HCT116 (cell line): ENCODE measurements at regions of chr9 and their contacts with region 1.

Region 1: GRCh38 chr9:122350638-122351355 is 20.0 kb upstream of the PTGS1 start:
- DNase-seq: peak; percentile 27
- ATAC-seq: peak; percentile 91
- H3K4me3 ChIP-seq: no peak overlapping the region
- H3K27ac ChIP-seq: no peak overlapping the region
- H3K4me1 ChIP-seq: peaks cover 3 to 13% of the 10 kb centered on the region in 2 experiments; a peak in 3 of 4 replicates
- H3K27me3 ChIP-seq: no peaks in the 10 kb centered on the region
- CTCF ChIP-seq: peak; percentile 93 to 97 (median 93)
- POLR2A ChIP-seq: no peak
- RAD21 ChIP-seq: peak; percentile 99

Region 2: GRCh38 chr9:122092611-122093506 is 257.9 kb before region 1 on chr9 and contains the start of gene TTLL11:
- CTCF ChIA-PET with region 1: interaction called, 75 read pairs
- POLR2A ChIA-PET with region 1: no interaction called
- RAD21 ChIA-PET with region 1: interaction called, 14 read pairs
- intact Hi-C with region 1: loop called (anchors 1 kb)
- DNase-seq: peak; percentile 82
- ATAC-seq: peak; percentile 87
- H3K4me3 ChIP-seq: peak within 1 kb of the TSS; percentile 69 to 85
- H3K27ac ChIP-seq: peak within 1 kb of the TSS; percentile 23; the same call in 1 of the 2 replicates
- H3K4me1 ChIP-seq: peaks cover 9 to 15% of the 10 kb centered on the region in 2 experiments
- H3K27me3 ChIP-seq: no peaks in the 10 kb centered on the region
- CTCF ChIP-seq: no peak
- POLR2A ChIP-seq: peak; percentile 38
- RAD21 ChIP-seq: no peak
- total RNA-seq, gene TTLL11: 2.2 TPM

Region 3: DNA sequence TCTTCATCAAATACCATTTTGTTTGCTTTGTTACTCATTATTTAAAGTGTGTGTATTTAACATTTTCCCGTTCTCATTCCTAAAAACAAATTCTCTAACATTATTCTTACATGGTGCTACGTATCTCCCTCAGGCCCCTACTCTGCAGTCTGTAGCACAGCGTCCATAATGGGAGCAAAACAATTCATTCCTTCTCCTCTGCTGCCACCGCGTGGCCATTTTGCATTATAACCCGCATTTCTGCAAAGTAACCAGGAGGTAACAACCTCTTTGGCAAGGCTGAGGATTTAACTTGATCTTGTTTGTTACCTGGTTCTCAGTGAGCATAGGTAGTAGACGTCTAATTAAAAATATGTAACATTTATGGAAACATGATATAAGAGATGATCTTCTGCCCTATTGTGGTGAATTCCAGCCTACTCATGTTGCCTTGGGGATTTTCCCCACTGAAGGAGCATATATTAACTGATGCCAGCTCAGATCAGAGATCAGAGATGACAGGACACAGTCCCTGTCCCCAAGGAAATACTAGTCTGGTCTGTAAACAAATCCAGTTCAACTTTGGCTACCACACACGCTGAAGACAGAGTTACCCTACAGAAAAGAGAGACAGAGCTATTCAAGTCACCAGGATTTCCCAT is 459.6 kb after region 1 on chr9:
- CTCF ChIA-PET with region 1: interaction called, 5 read pairs
- POLR2A ChIA-PET with region 1: no interaction called
- RAD21 ChIA-PET with region 1: no interaction called
- intact Hi-C with region 1: loop called (anchors 2 kb)
- DNase-seq: peak; percentile 61
- ATAC-seq: peak; percentile 96
- H3K4me3 ChIP-seq: no peak overlapping the region
- H3K27ac ChIP-seq: no peak overlapping the region
- H3K4me1 ChIP-seq: peaks cover 1 to 6% of the 10 kb centered on the region in 2 experiments; a peak in 3 of 4 replicates
- H3K27me3 ChIP-seq: no peaks in the 10 kb centered on the region
- CTCF ChIP-seq: peak; percentile 54 to 89 (median 85)
- POLR2A ChIP-seq: no peak
- RAD21 ChIP-seq: peak; percentile 97